Thyroid gland (tissue), 4 donors: ENCODE measurements at regions of chr1 and their contacts with region 1.

Region 1: DNA sequence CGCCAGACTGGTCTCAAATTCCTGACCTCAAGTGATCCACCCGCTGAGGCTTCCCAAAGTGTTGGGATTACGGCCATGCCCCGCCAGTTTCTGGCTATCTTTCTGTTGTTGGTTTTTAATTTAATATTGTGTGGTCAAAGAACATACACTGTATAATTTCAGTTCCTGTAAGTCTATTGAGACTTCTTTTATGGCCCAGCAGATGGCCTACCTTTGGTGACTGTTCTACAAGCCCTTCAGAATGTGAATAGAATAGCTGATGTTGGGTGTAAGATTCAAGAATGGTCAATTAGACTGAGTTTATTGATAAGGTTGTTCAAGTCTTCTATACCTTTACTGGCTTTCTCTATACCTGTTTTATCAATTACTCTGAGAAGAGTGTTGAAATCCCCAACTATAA is 10.7 kb downstream of the HES2 start:
- DNase-seq: no peak
- H3K4me3 ChIP-seq: no peak overlapping the region
- H3K27ac ChIP-seq: no peak overlapping the region
- H3K4me1 ChIP-seq: no peaks in the 10 kb centered on the region
- H3K27me3 ChIP-seq: no peaks in the 10 kb centered on the region
- CTCF ChIP-seq: no peak
- POLR2A ChIP-seq: no peak

Region 2: DNA sequence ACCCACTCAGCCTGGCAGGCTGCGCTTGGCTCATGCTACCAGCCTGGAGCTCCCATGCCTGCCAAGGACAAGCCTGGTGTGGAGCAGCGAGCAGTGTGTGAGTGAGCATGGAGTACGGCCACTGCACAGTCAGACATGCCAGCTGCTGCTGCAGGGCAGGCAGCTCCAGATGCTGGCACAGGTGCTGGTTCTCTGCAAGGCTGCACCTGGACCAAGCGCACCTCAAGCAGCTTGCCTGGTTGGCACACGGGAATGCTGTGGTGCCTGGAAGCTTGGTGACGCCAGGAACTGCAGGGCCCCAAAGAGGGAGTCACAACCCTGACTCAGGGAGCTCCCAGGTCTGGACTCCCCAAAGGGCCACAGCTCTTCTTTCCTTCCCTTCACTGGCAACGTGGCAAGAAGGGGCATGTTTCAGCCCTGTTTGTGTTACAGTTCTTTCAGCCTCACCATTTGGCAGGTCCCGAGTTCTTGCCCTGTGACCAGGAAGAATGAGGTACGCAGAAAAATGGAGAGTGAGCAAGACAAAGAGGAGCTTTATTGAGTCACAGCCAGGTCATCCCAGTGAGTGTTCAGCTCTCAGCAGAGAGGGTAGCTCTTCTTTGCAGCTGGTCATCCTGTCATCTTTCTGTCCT is 41.6 kb before region 1 on chr1:
- intact Hi-C with region 1: loop called (anchors 5 kb)
- DNase-seq: no peak
- H3K4me3 ChIP-seq: no peak overlapping the region
- H3K27ac ChIP-seq: no peak overlapping the region
- H3K4me1 ChIP-seq: no peaks in the 10 kb centered on the region
- H3K27me3 ChIP-seq: no peaks in the 10 kb centered on the region
- CTCF ChIP-seq: no peak
- POLR2A ChIP-seq: no peak